ENCODE measurements at regions of chr6 and their contacts with region 1.

Region 1: DNA sequence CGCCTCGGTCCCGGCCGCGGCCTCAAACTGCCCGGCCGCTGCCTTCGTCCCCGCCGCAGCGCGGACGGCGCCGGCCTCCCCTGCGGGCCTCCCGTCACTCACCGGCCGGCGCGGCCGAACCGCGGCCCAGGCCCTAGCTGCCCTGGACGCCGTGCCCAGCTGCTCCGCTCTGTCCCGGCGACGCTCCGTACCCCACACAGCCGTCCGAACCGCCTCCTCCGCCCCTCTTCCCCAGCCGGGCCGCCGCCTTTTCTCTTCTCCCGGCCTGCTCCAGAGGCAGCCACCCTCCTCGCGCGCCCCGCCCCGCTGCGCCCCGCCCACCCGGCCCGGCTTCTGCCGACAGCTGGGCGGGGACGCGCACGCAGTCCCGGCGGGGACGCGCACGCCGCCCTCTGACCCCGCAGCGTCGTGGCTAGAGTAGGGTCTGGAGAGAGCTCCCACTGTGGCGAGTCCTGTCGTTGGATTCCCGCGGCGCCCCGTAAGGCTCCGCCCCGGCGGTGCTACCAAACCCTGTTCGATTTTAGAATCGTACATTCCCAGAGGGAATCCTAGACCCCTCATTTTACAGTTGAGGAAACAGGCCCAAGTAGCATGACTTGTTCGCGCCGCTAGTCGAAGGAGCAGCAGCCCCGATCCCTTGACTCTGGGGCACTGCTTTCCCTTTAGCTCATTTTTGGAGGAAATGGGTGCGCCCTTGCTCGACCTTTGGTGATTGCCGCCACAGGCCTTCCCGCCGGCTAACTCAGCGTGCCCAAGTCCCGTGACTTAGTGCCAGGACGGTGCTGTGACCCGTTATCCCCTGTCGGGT is at the start of gene FBXO30:
- DNase-seq: peak; percentile 81
- H3K4me3 Mint-ChIP-seq: peak within 1 kb of the TSS; percentile 89
- H3K27ac Mint-ChIP-seq: peak within 1 kb of the TSS; percentile 84
- H3K4me1 Mint-ChIP-seq: peaks cover 31% of the 10 kb centered on the region
- H3K27me3 Mint-ChIP-seq: no peaks in the 10 kb centered on the region
- total RNA-seq, gene FBXO30: 2.0 to 2.1 TPM

Region 2: GRCh38 chr6:145836170-145836569 is 21.5 kb after region 1 on chr6:
- CTCF ChIA-PET with region 1: no interaction called
- intact Hi-C with region 1: loop called (anchors 1 kb)
- DNase-seq: peak; percentile 39
- H3K4me3 Mint-ChIP-seq: no peak overlapping the region
- H3K27ac Mint-ChIP-seq: no peak overlapping the region
- H3K4me1 Mint-ChIP-seq: peaks cover 7% of the 10 kb centered on the region
- H3K27me3 Mint-ChIP-seq: no peaks in the 10 kb centered on the region

Region 3: GRCh38 chr6:145866456-145867396 is 52.0 kb after region 1 on chr6:
- CTCF ChIA-PET with region 1: no interaction called
- intact Hi-C with region 1: loop called (anchors 2 kb)
- DNase-seq: no peak
- H3K4me3 Mint-ChIP-seq: no peak overlapping the region
- H3K27ac Mint-ChIP-seq: peak overlapping the region; percentile 13
- H3K4me1 Mint-ChIP-seq: peaks cover 25% of the 10 kb centered on the region
- H3K27me3 Mint-ChIP-seq: no peaks in the 10 kb centered on the region

Region 4: DNA sequence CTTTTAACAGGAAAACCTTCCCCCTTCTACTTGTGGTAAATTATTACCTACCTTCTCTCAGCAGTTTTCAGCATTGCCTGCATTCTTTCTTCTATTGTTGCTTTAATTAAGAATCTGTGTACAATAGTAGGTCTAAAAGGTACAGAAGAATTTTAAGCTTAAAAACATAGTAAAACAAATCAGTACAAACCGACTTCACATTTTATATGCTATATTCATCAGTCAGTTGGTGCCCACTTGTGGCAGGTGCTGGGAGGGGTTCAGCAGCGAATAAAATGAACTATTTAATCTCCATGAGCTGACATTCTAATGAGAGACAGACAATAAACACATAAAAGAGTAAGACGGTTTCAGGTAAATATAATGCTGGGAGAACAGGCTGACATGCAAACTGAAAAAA is 73.3 kb after region 1 on chr6:
- CTCF ChIA-PET with region 1: no interaction called
- intact Hi-C with region 1: loop called (anchors 2 kb)
- DNase-seq: peak; percentile 44
- H3K4me3 Mint-ChIP-seq: no peak overlapping the region
- H3K27ac Mint-ChIP-seq: no peak overlapping the region
- H3K4me1 Mint-ChIP-seq: no peaks in the 10 kb centered on the region
- H3K27me3 Mint-ChIP-seq: no peaks in the 10 kb centered on the region

Region 5: DNA sequence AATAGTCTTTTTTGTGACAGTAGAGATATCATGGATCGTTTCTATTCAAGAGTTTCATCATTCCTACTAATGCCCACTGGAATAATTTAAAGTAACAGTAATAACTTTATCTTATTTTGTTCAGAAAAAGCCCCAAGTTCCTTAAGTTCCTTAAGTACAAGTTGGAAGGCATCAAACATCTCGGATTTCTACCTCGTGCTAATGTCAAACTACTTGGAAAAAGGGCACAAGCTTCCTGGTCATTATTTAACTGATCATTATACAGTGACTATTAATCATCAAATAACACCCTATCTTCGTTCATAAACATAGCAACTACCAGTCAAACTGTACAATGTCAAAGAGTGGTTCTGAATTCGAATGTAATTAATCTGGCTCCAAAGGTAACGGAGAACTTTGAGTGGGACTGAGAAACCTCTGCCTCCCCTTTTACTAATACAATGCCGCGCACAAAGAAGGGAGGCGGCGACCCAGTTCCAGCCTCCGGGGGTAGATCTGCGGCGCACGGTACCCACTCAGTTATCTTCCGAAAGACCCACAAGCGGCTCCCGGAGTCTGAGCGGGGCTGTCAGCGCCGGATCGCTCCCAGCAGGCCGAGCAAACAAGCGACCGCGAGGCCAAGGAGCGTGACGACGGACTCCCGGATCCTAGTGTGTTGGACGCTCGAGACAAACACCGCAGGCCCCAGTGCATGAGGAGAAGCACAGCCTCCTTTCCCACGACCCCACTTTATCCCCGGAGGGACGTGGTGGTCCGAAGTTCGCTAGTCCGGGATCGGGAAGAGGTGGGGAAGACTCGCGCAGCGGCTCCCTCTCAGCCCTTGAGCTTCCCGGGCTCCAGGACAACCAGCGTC is 148.7 kb after region 1 on chr6:
- CTCF ChIA-PET with region 1: no interaction called
- intact Hi-C with region 1: loop called (anchors 1 kb)
- DNase-seq: peak; percentile 58
- H3K4me3 Mint-ChIP-seq: peak overlapping the region; percentile 94
- H3K27ac Mint-ChIP-seq: peak overlapping the region; percentile 70
- H3K4me1 Mint-ChIP-seq: peaks cover 48% of the 10 kb centered on the region
- H3K27me3 Mint-ChIP-seq: no peaks in the 10 kb centered on the region